ENCODE measurements at regions of chr11 and their contacts with region 1.

Region 1: GRCh38 chr11:57456960-57457642 is 3.2 kb upstream of the RTN4RL2 start:
- DNase-seq: peak in 34 of 35 experiments; percentile 28 to 84 (median 60)
- ATAC-seq: peak; percentile 45 to 70 (median 58)
- H3K4me3 ChIP-seq: no peak overlapping the region
- H3K4me3 Mint-ChIP-seq: peak overlapping the region; percentile 50 to 97 (median 61)
- H3K27ac ChIP-seq: no peak overlapping the region
- H3K27ac Mint-ChIP-seq: no peak overlapping the region
- H3K4me1 ChIP-seq: peaks cover 14 to 41% of the 10 kb centered on the region in 2 experiments
- H3K4me1 Mint-ChIP-seq: peaks cover 23 to 32% (median 31%) of the 10 kb centered on the region in 3 donors
- H3K27me3 ChIP-seq: peaks cover 4 to 65% of the 10 kb centered on the region in 2 experiments
- H3K27me3 Mint-ChIP-seq: peaks cover 33 to 38% of the 10 kb centered on the region in 2 donors

Region 2: GRCh38 chr11:57474017-57474802 is 17.1 kb after region 1 on chr11:
- CTCF ChIA-PET with region 1: interaction called, 7 to 12 read pairs
- POLR2A ChIA-PET with region 1: no interaction called
- DNase-seq: peak in 25 of 35 experiments; percentile 11 to 63 (median 37)
- ATAC-seq: peak; percentile 59 to 81 (median 79)
- H3K4me3 ChIP-seq: no peak overlapping the region
- H3K4me3 Mint-ChIP-seq: peak overlapping the region in 1 of 3 donors; percentile 81
- H3K27ac ChIP-seq: no peak overlapping the region
- H3K27ac Mint-ChIP-seq: peak overlapping the region; percentile 61 to 76
- H3K4me1 ChIP-seq: peaks cover 13 to 37% of the 10 kb centered on the region in 2 experiments
- H3K4me1 Mint-ChIP-seq: peaks cover 27 to 32% (median 29%) of the 10 kb centered on the region in 3 donors
- H3K27me3 ChIP-seq: peaks cover 0 to 34% of the 10 kb centered on the region in 2 experiments
- H3K27me3 Mint-ChIP-seq: peaks cover 0 to 39% of the 10 kb centered on the region in 2 donors

Region 3: DNA sequence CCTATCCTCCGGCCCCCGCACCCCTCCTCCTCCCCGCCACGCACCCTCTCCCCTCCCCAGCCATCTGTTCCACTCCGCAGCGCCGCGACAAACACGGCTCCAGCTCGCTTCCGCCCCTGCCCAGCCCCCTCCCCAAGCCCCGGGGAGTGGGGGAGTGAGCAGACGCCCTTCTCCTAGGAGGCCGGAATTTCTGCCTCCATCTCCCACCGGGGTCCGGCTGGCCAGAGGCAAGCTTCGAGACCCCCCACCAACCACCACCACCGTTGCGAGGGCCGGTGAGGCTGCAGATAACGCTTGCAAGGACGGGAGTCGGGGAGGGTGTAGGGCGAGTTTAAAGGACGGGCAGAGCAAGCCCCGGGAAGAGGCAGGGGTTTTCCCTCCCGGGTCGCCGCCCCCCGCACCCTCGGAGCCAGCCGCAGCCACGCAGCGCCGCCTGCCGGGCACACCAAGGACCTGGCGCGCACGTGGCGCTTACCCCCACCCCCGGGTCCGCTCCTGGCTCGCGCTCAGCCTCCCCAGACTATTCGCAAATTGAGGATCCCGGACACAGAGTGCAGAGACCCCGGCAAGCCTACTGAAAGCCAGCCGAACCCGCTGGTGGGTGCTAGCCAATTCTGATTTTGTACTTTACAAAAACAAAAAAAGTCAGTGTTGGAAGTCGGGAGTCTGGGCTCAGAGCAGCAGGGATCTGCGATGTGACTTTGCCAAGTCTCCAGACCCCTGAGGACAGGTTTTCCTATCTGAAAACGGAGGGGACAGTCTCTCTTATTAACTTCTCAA is 25.9 kb after region 1 on chr11:
- CTCF ChIA-PET with region 1: interaction called, 9 to 27 read pairs
- POLR2A ChIA-PET with region 1: no interaction called
- DNase-seq: peak in 33 of 35 experiments; percentile 23 to 78 (median 53)
- ATAC-seq: peak; percentile 64 to 92 (median 74)
- H3K4me3 ChIP-seq: peak overlapping the region; percentile 21 to 39
- H3K4me3 Mint-ChIP-seq: peak overlapping the region in 2 of 3 donors; percentile 28 to 47
- H3K27ac ChIP-seq: no peak overlapping the region
- H3K27ac Mint-ChIP-seq: no peak overlapping the region
- H3K4me1 ChIP-seq: peaks cover 2 to 20% of the 10 kb centered on the region in 2 experiments
- H3K4me1 Mint-ChIP-seq: peaks cover 5 to 17% (median 12%) of the 10 kb centered on the region in 3 donors
- H3K27me3 ChIP-seq: peaks cover 0 to 45% of the 10 kb centered on the region in 2 experiments
- H3K27me3 Mint-ChIP-seq: peaks cover 12 to 30% of the 10 kb centered on the region in 2 donors

Region 4: DNA sequence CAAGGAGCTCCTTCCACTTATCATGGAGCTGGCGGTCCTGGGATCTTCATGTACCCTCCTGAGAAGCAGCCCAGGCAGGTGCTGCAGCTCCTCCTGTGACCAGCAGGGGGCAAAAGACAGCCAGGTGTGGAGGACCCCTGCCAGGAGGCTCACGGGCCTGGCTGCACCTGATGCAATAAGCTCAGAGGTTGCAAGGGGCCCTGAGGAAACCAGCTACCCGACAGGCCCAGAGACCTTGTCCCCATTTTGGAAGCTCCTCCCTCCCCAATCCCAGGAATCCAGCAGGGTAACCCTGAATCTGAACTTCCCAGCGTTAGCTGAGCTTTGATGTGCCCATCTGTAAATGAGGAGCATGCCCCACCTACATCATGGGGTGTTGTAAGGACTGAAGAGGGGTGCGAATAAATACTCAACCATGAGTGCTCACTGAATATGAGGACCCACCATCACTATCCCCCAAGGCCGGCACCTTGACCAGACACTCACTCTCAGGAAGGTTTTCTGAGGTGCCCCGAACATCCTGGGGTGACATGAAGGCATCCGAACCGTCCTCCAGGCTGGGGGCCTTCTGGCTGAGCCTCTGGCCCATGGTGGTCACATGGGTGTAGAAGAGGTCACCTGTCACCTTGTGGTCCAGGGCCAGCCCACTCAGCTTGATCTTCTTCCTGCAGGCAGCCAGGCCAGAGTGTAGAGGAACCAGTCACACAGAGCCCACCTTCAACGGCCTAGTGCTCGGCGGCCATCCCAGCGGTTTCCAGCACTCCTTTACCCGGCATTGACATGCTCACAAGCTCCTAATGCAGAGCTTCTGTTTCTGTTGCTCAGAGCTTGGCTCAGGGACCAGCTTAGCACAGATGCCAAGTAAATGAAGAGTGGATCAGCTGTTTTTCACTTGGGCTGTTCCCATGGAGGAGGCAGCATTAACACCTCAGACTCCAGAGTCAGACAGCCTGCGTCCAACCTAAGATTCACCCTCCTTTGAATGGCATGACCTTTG is 36.7 kb after region 1 on chr11:
- CTCF ChIA-PET with region 1: interaction called, 18 to 22 read pairs
- POLR2A ChIA-PET with region 1: no interaction called
- DNase-seq: peak; percentile 34 to 80 (median 64)
- ATAC-seq: peak; percentile 89 to 92 (median 91)
- H3K4me3 ChIP-seq: no peak overlapping the region
- H3K4me3 Mint-ChIP-seq: no peak overlapping the region
- H3K27ac ChIP-seq: no peak overlapping the region
- H3K27ac Mint-ChIP-seq: peak overlapping the region; percentile 19 to 39
- H3K4me1 ChIP-seq: peaks cover 0 to 3% of the 10 kb centered on the region in 2 experiments
- H3K4me1 Mint-ChIP-seq: peaks cover 0 to 3% (median 0%) of the 10 kb centered on the region in 3 donors
- H3K27me3 ChIP-seq: peaks cover 0 to 7% of the 10 kb centered on the region in 2 experiments
- H3K27me3 Mint-ChIP-seq: no peaks in the 10 kb centered on the region

Region 5: GRCh38 chr11:57530596-57531507 is 73.8 kb after region 1 on chr11 and contains the start of gene TIMM10:
- CTCF ChIA-PET with region 1: interaction called, 43 to 46 read pairs
- POLR2A ChIA-PET with region 1: interaction called in 1 of 2 experiments, 3 read pairs
- DNase-seq: peak; percentile 81 to 97 (median 91)
- ATAC-seq: peak; percentile 94 to 95 (median 94)
- H3K4me3 ChIP-seq: peak within 1 kb of the TSS; percentile 75 to 84
- H3K4me3 Mint-ChIP-seq: peak within 1 kb of the TSS; percentile 89 to 97 (median 91)
- H3K27ac ChIP-seq: peak within 1 kb of the TSS; percentile 83
- H3K27ac Mint-ChIP-seq: peak within 1 kb of the TSS; percentile 96
- H3K4me1 ChIP-seq: peaks cover 10 to 20% of the 10 kb centered on the region in 2 experiments
- H3K4me1 Mint-ChIP-seq: peaks cover 32 to 38% (median 37%) of the 10 kb centered on the region in 3 donors
- H3K27me3 ChIP-seq: no peaks in the 10 kb centered on the region
- H3K27me3 Mint-ChIP-seq: no peaks in the 10 kb centered on the region
- total RNA-seq, gene TIMM10: 20.7 to 33.2 (median 26.2) TPM

Region 6: DNA sequence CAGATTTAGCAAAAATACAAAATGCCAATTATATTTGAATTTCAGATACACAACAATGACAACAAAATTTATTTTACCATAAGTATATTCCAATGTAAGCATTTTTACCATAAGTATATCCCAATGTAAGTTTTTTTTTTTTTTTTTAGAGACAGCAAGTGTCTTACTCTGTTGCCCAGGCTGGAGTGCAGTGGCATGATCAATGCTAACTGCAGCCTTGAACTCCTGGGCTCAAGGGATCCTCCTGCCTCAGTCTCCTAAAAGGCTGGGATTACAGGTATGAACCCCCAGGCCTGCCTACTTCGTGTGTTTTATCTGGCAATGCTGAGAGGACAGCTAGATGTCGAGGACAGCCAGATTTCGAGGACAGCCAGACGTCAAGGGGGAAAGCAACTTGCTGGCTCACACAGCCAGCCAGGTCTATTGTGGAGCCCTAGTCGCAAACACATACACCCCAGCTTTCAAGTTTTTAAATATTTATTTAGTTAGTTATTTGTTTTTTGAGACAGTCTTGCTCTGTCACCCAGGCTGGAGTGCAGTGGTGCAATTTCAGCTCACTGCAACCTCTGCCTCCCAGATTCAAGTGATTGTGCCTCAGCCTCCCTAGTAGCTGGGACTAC is 139.3 kb after region 1 on chr11:
- CTCF ChIA-PET with region 1: no interaction called
- POLR2A ChIA-PET with region 1: interaction called in 1 of 2 experiments, 12 read pairs
- DNase-seq: no peak
- ATAC-seq: no peak
- H3K4me3 ChIP-seq: no peak overlapping the region
- H3K4me3 Mint-ChIP-seq: no peak overlapping the region
- H3K27ac ChIP-seq: no peak overlapping the region
- H3K27ac Mint-ChIP-seq: no peak overlapping the region
- H3K4me1 ChIP-seq: peaks cover 0 to 6% of the 10 kb centered on the region in 2 experiments
- H3K4me1 Mint-ChIP-seq: peaks cover 0 to 7% (median 3%) of the 10 kb centered on the region in 3 donors
- H3K27me3 ChIP-seq: peaks cover 0 to 28% of the 10 kb centered on the region in 2 experiments
- H3K27me3 Mint-ChIP-seq: peaks cover 28 to 42% of the 10 kb centered on the region in 2 donors

Measured in T-cell (primary cell).